MCF 10A (cell line): ENCODE measurements at regions of chr9 and their contacts with region 1.

Region 1: DNA sequence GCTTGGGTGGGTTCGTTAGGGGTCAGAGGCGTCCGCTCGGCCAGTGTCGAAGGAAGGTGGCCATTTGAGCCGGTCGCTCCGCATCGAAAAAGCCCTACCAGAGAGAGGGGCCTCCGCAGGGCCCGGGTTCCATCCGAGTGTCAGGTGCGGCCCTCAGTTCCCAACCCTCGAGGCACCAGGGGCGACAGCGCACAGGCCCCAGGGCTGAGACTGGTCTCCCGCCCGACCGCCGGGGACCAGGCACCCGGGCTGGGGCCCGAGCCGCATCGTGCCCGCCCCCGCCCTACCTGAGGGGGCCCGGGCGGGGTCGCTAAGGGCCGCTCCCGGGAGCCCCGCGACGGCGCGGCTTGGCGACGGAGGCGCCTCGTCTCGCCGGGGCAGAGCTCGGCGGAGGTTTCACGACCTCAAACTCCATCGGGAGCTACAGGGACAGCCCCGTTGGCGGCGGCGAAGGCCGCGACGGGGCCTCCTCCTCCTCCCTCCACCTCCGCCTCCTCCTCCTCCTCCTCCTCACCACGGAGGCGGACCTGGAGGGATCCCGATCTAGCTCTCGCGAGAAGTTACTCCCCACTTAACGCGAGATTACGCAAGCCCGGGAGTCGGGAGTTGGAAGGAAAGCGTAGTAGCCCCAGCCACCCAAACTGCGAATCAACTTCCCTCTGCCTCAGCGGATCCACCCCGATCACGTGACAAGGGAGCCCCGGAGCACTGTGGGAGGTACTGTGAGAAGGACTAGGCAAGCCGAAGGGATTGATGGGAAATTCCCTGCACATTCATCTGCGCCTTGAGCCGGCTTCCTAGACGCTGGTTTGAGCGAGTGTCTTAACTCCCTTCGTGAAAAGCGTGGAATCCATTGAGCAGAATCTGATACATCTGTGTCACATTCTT is at the start of gene RC3H2:
- DNase-seq: peak; percentile 100
- H3K4me3 Mint-ChIP-seq: peak within 1 kb of the TSS; percentile 89
- H3K27ac Mint-ChIP-seq: peak within 1 kb of the TSS; percentile 92
- H3K4me1 Mint-ChIP-seq: peaks cover 9% of the 10 kb centered on the region
- H3K27me3 Mint-ChIP-seq: no peaks in the 10 kb centered on the region
- CTCF ChIP-seq: no peak
- total RNA-seq, gene RC3H2: 52.4 and 59.1 TPM in 2 replicates

Region 2: GRCh38 chr9:122672481-122672880 is 232.6 kb before region 1 on chr9:
- CTCF ChIA-PET with region 1: no interaction called
- POLR2A ChIA-PET with region 1: no interaction called
- intact Hi-C with region 1: no loop called
- DNase-seq: no peak
- H3K4me3 Mint-ChIP-seq: no peak overlapping the region
- H3K27ac Mint-ChIP-seq: no peak overlapping the region
- H3K4me1 Mint-ChIP-seq: no peaks in the 10 kb centered on the region
- H3K27me3 Mint-ChIP-seq: peaks cover 56% of the 10 kb centered on the region
- CTCF ChIP-seq: no peak

Region 3: GRCh38 chr9:122848256-122848943 is 56.7 kb before region 1 on chr9:
- CTCF ChIA-PET with region 1: no interaction called
- POLR2A ChIA-PET with region 1: no interaction called
- intact Hi-C with region 1: no loop called
- DNase-seq: no peak
- H3K4me3 Mint-ChIP-seq: no peak overlapping the region
- H3K27ac Mint-ChIP-seq: no peak overlapping the region
- H3K4me1 Mint-ChIP-seq: no peaks in the 10 kb centered on the region
- H3K27me3 Mint-ChIP-seq: no peaks in the 10 kb centered on the region
- CTCF ChIP-seq: no peak

Region 4: GRCh38 chr9:122865300-122865699 is 39.8 kb before region 1 on chr9:
- CTCF ChIA-PET with region 1: no interaction called
- POLR2A ChIA-PET with region 1: no interaction called
- intact Hi-C with region 1: no loop called
- DNase-seq: no peak
- H3K4me3 Mint-ChIP-seq: no peak overlapping the region
- H3K27ac Mint-ChIP-seq: no peak overlapping the region
- H3K4me1 Mint-ChIP-seq: no peaks in the 10 kb centered on the region
- H3K27me3 Mint-ChIP-seq: no peaks in the 10 kb centered on the region
- CTCF ChIP-seq: no peak

Region 5: GRCh38 chr9:122940603-122941559 is 35.8 kb after region 1 on chr9 and contains the start of gene RABGAP1:
- CTCF ChIA-PET with region 1: interaction called, 5 read pairs
- POLR2A ChIA-PET with region 1: interaction called, 100 read pairs
- intact Hi-C with region 1: loop called (anchors 5 kb)
- DNase-seq: peak; percentile 99
- H3K4me3 Mint-ChIP-seq: peak within 1 kb of the TSS; percentile 91
- H3K27ac Mint-ChIP-seq: peak within 1 kb of the TSS; percentile 85
- H3K4me1 Mint-ChIP-seq: peaks cover 5% of the 10 kb centered on the region
- H3K27me3 Mint-ChIP-seq: no peaks in the 10 kb centered on the region
- CTCF ChIP-seq: no peak
- total RNA-seq, gene RABGAP1: 41.1 and 43.1 TPM in 2 replicates

Region 6: DNA sequence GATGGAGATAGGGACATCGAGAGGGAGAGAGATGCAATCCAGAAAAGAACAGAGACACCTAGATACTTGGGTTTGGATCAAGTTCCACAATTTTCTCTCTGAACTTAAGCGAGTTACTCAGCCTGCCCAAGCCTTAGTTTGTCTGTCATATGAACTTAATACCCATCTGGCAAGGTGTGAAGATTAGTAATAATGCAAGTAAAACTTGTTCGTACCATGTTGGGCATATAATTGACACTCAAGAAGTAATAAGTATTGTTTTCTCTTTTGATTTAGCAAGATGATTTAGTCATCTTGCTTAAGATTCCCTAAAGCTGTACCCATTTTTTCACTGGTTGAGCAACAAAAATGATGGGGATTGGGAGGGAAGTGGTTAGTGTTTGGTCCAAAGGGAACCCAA is 43.2 kb after region 1 on chr9:
- CTCF ChIA-PET with region 1: interaction called, 5 read pairs
- POLR2A ChIA-PET with region 1: interaction called, 100 read pairs
- intact Hi-C with region 1: loop called (anchors 5 kb)
- DNase-seq: no peak
- H3K4me3 Mint-ChIP-seq: no peak overlapping the region
- H3K27ac Mint-ChIP-seq: peak overlapping the region; percentile 10
- H3K4me1 Mint-ChIP-seq: peaks cover 22% of the 10 kb centered on the region
- H3K27me3 Mint-ChIP-seq: no peaks in the 10 kb centered on the region
- CTCF ChIP-seq: no peak

Region 7: GRCh38 chr9:122954253-122954691 is 49.2 kb after region 1 on chr9:
- CTCF ChIA-PET with region 1: interaction called, 3 read pairs
- POLR2A ChIA-PET with region 1: interaction called, 4 read pairs
- intact Hi-C with region 1: loop called (anchors 5 kb)
- DNase-seq: peak; percentile 44
- H3K4me3 Mint-ChIP-seq: peak overlapping the region; percentile 33
- H3K27ac Mint-ChIP-seq: peak overlapping the region; percentile 76
- H3K4me1 Mint-ChIP-seq: peaks cover 30% of the 10 kb centered on the region
- H3K27me3 Mint-ChIP-seq: no peaks in the 10 kb centered on the region
- CTCF ChIP-seq: no peak